HCT116 (cell line): ENCODE measurements at regions of chr22 and their contacts with region 1.

Region 1: DNA sequence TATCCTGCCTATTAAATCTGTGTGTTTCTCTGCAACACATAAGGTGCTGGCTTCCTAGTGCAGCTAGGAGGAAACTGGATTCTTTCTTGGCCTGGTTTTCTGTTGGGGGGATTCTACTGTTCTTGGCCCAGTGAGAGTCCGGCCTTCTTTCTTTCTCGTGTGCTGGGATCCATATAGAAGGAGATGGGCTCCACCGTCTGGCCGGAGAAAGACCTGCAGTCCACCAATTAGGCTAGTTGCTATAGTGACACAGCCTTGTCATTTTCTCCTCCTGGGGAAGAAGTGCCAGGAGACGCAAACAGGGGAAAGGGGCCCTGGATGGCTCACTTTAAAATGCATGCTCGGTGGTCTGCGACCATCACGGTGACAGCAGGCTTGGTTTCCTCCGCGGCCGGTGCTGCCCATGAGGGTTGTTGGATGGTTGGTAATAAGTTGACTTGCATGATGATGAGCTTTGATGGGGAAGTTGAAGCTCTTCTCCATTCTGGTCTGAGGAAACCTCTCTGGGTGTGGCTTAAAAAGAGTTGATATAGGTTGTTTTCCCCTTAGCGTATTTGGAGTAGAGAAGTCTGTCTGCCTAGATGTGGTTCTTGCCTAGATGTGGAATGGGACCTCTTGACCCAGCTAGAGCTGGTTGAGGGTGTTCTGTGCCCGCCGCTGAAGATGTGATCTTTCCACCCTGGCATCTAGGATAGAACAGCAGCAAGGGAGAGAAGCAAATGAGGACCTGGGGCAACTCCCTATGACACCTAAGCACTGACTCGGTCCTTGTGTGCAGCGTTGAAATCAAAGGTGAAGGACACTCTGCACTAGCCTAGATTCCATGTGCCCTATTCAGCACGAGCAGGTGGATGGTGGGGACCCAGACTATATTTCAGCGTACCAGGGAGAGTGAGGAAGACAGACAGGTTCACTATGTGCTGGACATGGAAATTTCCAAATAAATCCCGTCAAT is 1335.0 kb downstream of the BRD1 start:
- DNase-seq: peak; percentile 48
- ATAC-seq: peak; percentile 90
- H3K4me3 ChIP-seq: no peak overlapping the region
- H3K27ac ChIP-seq: no peak overlapping the region
- H3K4me1 ChIP-seq: no peaks in the 10 kb centered on the region
- H3K27me3 ChIP-seq: no peaks in the 10 kb centered on the region
- CTCF ChIP-seq: peak; percentile 37 to 79 (median 76); a peak in 5 of 6 replicates
- POLR2A ChIP-seq: no peak
- RAD21 ChIP-seq: peak; percentile 77

Region 2: DNA sequence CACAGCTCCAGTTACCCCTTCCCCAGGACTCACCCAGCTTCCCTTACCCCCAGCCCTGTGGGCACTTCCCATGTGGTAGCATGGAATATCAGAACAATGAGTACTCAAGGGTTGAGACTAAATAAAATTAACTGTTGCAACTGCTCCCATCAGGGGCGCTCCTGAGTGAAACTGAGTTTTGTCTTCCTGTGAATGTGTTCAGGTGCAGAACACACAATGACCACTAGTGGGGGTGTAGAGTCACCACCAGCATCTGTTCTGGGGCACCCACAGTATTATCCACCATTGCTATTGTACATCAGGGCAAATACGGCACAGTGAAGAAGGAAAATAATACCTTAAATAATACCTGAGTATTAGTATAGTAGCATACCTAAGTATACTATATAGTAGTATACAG is 1040.5 kb before region 1 on chr22:
- CTCF ChIA-PET with region 1: no interaction called
- POLR2A ChIA-PET with region 1: no interaction called
- RAD21 ChIA-PET with region 1: no interaction called
- intact Hi-C with region 1: loop called (anchors 1 kb)
- DNase-seq: peak; percentile 68
- ATAC-seq: peak; percentile 96
- H3K4me3 ChIP-seq: no peak overlapping the region
- H3K27ac ChIP-seq: no peak overlapping the region
- H3K4me1 ChIP-seq: no peaks in the 10 kb centered on the region
- H3K27me3 ChIP-seq: no peaks in the 10 kb centered on the region
- CTCF ChIP-seq: peak; percentile 93 to 96 (median 95)
- POLR2A ChIP-seq: no peak
- RAD21 ChIP-seq: peak; percentile 62

Region 3: GRCh38 chr22:47626428-47627390 is 865.9 kb before region 1 on chr22:
- CTCF ChIA-PET with region 1: interaction called, 3 read pairs
- POLR2A ChIA-PET with region 1: no interaction called
- RAD21 ChIA-PET with region 1: no interaction called
- intact Hi-C with region 1: loop called (anchors 5 kb)
- DNase-seq: peak; percentile 6
- ATAC-seq: peak; percentile 46
- H3K4me3 ChIP-seq: no peak overlapping the region
- H3K27ac ChIP-seq: no peak overlapping the region; the same call in 1 of the 2 replicates
- H3K4me1 ChIP-seq: peaks cover 13 to 22% of the 10 kb centered on the region in 2 experiments
- H3K27me3 ChIP-seq: no peaks in the 10 kb centered on the region
- CTCF ChIP-seq: peak in 2 of 3 experiments; percentile 15 to 18; a peak in 2 of 6 replicates
- POLR2A ChIP-seq: no peak
- RAD21 ChIP-seq: peak; percentile 56

Region 4: DNA sequence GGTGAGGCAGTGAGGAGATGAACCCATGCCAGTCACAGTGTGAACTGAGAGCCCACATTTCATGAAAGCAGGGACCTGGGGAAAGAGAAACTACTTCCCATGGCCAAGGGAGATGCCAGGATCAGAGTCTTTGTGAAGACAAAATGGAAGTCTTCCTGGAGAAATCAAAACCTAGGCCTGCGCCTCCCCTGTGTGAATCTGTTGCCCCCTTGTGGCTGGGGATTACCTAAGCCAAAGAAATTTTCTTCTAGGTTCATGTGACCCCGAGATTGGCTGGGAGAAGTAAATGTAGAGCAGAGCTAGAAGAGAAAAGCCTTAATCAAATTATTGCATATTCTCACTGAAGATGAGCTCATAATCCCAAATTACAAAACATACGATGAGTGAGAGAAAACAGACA is 654.9 kb before region 1 on chr22:
- CTCF ChIA-PET with region 1: no interaction called
- POLR2A ChIA-PET with region 1: no interaction called
- RAD21 ChIA-PET with region 1: no interaction called
- intact Hi-C with region 1: loop called (anchors 5 kb)
- DNase-seq: peak; percentile 13
- ATAC-seq: peak; percentile 53; the same call in 1 of the 2 replicates
- H3K4me3 ChIP-seq: no peak overlapping the region
- H3K27ac ChIP-seq: no peak overlapping the region
- H3K4me1 ChIP-seq: no peaks in the 10 kb centered on the region
- H3K27me3 ChIP-seq: no peaks in the 10 kb centered on the region
- CTCF ChIP-seq: peak; percentile 28 to 63 (median 58); a peak in 5 of 6 replicates
- POLR2A ChIP-seq: no peak
- RAD21 ChIP-seq: peak; percentile 56

Region 5: GRCh38 chr22:48209473-48210197 is 283.0 kb before region 1 on chr22:
- CTCF ChIA-PET with region 1: no interaction called
- POLR2A ChIA-PET with region 1: no interaction called
- RAD21 ChIA-PET with region 1: no interaction called
- intact Hi-C with region 1: no loop called
- DNase-seq: no peak
- ATAC-seq: no peak
- H3K4me3 ChIP-seq: no peak overlapping the region
- H3K27ac ChIP-seq: no peak overlapping the region
- H3K4me1 ChIP-seq: no peaks in the 10 kb centered on the region
- H3K27me3 ChIP-seq: peaks cover 8% of the 10 kb centered on the region; the same call in 1 of the 2 replicates
- CTCF ChIP-seq: no peak
- POLR2A ChIP-seq: no peak
- RAD21 ChIP-seq: no peak

Region 6: DNA sequence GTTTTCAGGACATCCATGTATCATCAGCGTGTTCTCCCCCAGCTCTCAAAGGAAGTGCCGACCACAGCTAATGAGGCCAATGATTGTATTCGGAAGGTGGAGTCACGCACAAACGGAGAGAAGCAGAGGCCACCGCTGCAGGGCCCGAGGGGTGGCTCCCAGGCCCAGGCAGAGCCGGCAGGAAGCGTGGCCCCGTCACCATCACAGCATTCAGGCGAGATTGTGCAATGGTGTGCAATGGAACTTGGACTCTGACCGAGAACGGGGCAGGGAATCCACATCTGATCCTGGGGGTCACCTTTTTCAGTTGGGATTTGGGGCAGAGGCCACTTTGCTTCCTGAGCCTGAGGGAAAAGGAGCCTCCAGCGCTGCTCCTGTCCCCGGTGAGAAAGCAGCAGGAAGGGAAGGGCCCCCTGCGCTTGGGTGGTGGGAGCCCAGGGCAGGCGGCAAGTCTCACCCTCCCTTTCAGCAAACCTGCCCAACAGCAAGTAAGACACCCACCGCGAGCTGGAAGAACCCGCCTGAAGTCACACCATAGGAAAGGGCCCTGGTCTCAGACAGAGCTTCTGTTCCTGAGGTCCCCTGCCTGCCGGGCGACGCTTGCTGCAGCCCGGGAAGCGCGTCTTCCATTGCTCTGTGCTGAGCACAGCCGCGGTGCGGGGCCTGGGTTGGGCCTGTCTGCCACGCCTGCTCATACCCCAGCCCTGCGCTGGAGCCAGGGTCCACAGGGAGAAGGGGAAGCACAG is 95.7 kb before region 1 on chr22:
- CTCF ChIA-PET with region 1: no interaction called
- POLR2A ChIA-PET with region 1: no interaction called
- RAD21 ChIA-PET with region 1: no interaction called
- intact Hi-C with region 1: no loop called
- DNase-seq: no peak
- ATAC-seq: no peak
- H3K4me3 ChIP-seq: no peak overlapping the region
- H3K27ac ChIP-seq: no peak overlapping the region
- H3K4me1 ChIP-seq: no peaks in the 10 kb centered on the region
- H3K27me3 ChIP-seq: peaks cover 6% of the 10 kb centered on the region
- CTCF ChIP-seq: no peak
- POLR2A ChIP-seq: no peak
- RAD21 ChIP-seq: no peak